Lower leg skin (tissue), 4 donors: ENCODE measurements at regions of chr3 and their contacts with region 1.

Region 1: GRCh38 chr3:136042608-136043221 is 77.2 kb downstream of the PPP2R3A start:
- DNase-seq: no peak
- H3K4me3 ChIP-seq: no peak overlapping the region
- CTCF ChIP-seq: no peak
- POLR2A ChIP-seq: no peak

Region 2: GRCh38 chr3:135905058-135905724 is 137.5 kb before region 1 on chr3:
- intact Hi-C with region 1: loop called (anchors 5 kb)
- DNase-seq: no peak
- H3K4me3 ChIP-seq: no peak overlapping the region
- CTCF ChIP-seq: no peak
- POLR2A ChIP-seq: no peak

Region 3: GRCh38 chr3:137347132-137347531 is 1304.4 kb after region 1 on chr3:
- intact Hi-C with region 1: no loop called
- DNase-seq: no peak
- H3K4me3 ChIP-seq: no peak overlapping the region
- CTCF ChIP-seq: no peak
- POLR2A ChIP-seq: no peak